ENCODE measurements at regions of chrX and their contacts with region 1.

Region 1: GRCh38 chrX:27186664-27187063 is 276.5 kb downstream of the PPP4R3C start:
- DNase-seq: no peak
- ATAC-seq: no peak
- H3K4me3 ChIP-seq: no peak overlapping the region
- H3K27ac ChIP-seq: no peak overlapping the region
- H3K4me1 ChIP-seq: no peaks in the 10 kb centered on the region
- H3K27me3 ChIP-seq: no peaks in the 10 kb centered on the region
- CTCF ChIP-seq: peak; percentile 19 to 81 (median 64)

Region 2: DNA sequence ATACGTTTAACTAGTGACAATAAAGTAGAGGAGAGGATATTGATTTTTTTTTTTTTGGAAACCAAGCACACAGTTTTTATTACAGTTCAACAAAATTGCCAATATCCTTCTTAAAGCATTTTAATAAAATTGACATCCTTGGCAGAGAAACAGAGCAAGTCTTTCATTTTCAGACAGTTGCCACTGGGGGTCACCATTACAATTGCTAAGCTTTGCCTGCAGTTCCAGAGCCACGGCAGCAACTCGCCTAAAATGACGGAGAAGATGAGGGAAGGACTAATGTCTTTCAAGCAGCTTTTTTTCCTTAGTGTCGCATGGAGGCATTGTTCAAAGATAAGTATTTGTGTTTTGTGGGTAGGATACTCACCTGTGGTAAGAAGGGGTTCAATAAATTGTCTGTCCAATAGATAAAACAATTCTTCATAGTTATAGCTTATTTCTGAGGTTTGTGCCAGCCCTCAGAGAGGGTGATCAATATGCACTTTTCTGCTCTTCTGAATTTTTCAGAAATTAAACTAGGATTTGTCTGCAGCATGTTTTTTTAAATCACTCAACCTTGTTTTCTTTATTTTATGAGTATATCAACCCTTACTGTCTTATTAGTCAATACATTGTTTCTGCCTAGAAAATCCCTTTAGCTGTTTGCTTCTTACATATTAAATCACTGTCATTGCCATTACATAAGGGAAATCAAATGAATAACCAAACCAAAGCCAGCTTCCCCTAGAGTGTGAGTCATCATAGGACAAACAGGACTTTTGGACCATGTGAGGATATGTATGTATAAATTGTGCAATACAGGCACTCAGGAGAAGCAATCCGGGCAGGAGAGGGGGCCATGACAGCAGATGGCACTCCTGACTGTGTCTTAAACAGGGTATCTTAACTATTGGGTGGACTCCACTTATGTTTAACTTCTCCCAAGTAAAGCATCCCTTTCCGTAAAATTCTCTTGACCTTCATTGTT is 1662.8 kb before region 1 on chrX:
- intact Hi-C with region 1: loop called in 1 of 10 experiments (anchors 5 kb)
- DNase-seq: peak in 1 of 2 donors; percentile 18
- ATAC-seq: no peak
- H3K4me3 ChIP-seq: no peak overlapping the region
- H3K27ac ChIP-seq: no peak overlapping the region
- H3K4me1 ChIP-seq: no peaks in the 10 kb centered on the region
- H3K27me3 ChIP-seq: no peaks in the 10 kb centered on the region
- CTCF ChIP-seq: peak in 7 of 9 donors; percentile 25 to 48 (median 35)

Region 3: DNA sequence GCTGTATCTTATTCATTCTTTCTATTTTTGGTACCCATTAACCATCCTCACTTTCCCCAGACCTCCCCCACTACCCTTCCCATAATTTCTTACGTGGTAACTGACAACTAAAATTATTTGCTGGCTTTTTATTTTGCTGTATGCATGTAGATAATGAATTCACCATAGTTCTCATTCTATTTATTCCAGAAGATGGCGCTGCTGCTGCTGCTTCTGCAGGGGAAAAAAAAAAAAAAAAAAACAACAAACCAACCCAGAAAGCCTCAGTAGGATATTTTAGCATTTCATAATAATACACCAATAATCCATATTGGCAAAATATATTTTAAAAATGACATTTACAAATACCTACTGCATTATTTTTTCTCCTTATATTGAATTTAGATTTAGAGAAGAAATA is 1465.1 kb before region 1 on chrX:
- intact Hi-C with region 1: loop called in 1 of 10 experiments (anchors 10 kb)
- DNase-seq: no peak
- ATAC-seq: no peak
- H3K4me3 ChIP-seq: no peak overlapping the region
- H3K27ac ChIP-seq: no peak overlapping the region
- H3K4me1 ChIP-seq: no peaks in the 10 kb centered on the region
- H3K27me3 ChIP-seq: no peaks in the 10 kb centered on the region
- CTCF ChIP-seq: peak in 7 of 9 donors; percentile 28 to 58 (median 42)

Region 4: GRCh38 chrX:26788402-26788998 is 398.2 kb before region 1 on chrX:
- intact Hi-C with region 1: no loop called
- DNase-seq: no peak
- ATAC-seq: no peak
- H3K4me3 ChIP-seq: no peak overlapping the region
- H3K27ac ChIP-seq: no peak overlapping the region
- H3K4me1 ChIP-seq: no peaks in the 10 kb centered on the region
- H3K27me3 ChIP-seq: no peaks in the 10 kb centered on the region
- CTCF ChIP-seq: no peak

Region 5: DNA sequence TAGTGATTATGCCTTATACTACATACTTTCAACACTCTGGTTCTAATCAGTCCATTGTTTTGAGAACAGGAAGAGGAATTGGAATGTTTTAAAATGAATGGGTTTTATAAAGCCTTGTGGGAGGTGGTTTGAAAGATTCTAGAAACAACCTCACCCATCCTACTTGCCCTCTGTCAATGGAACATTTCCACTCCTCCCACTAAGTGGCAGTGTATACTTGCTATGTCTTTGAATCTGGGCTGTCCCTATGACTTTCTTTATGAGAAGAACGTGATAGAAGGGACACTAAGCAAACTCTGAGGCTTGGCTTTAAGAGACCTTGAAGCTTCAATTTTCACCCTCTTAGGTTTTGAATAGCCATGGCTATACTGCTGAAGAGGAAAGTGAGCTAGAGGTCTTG is 334.7 kb before region 1 on chrX:
- intact Hi-C with region 1: loop called in 3 of 10 experiments (anchors 5 to 10 kb)
- DNase-seq: no peak
- ATAC-seq: no peak
- H3K4me3 ChIP-seq: no peak overlapping the region
- H3K27ac ChIP-seq: no peak overlapping the region
- H3K4me1 ChIP-seq: no peaks in the 10 kb centered on the region
- H3K27me3 ChIP-seq: no peaks in the 10 kb centered on the region
- CTCF ChIP-seq: peak in 6 of 9 donors; percentile 13 to 38 (median 20)

Measured in heart right ventricle (tissue), 16 donors.